GM13976 (cell line): ENCODE measurements at regions of chr11 and their contacts with region 1.

Region 1: GRCh38 chr11:34679681-34680080 is 58.8 kb downstream of the EHF start:
- DNase-seq: no peak
- CTCF ChIP-seq: no peak

Region 2: GRCh38 chr11:34732831-34733230 is 53.1 kb after region 1 on chr11:
- in situ Hi-C with region 1: loop called (anchors 10 kb)
- DNase-seq: no peak
- CTCF ChIP-seq: no peak